Aorta (tissue), 5 donors: ENCODE measurements at regions of chr22 and their contacts with region 1.

Region 1: DNA sequence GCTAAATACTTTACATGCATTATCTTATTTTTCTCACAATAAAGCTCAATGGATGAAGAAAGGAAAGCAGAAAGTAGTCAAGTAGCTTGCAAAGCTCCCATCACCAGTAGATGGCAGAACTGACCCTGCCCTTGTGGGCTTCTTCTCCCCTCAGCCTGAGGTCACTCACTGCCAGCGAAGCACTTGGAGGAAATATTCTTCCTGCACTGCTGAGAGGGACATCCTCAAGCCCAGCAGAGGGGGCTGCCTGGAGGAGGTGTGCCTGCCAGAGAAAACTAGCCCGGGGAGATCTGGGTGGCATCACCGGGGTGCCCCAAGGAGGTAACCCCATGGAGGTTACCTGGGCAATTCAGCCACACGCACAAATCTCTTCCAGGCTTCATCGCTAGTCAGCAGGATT is 6.6 kb downstream of the APOL4 start:
- DNase-seq: peak in 1 of 2 donors; percentile 78
- ATAC-seq: peak; percentile 74
- H3K4me3 ChIP-seq: no peak overlapping the region
- H3K27ac ChIP-seq: no peak overlapping the region
- H3K4me1 ChIP-seq: no peaks in the 10 kb centered on the region
- H3K27me3 ChIP-seq: no peaks in the 10 kb centered on the region

Region 2: DNA sequence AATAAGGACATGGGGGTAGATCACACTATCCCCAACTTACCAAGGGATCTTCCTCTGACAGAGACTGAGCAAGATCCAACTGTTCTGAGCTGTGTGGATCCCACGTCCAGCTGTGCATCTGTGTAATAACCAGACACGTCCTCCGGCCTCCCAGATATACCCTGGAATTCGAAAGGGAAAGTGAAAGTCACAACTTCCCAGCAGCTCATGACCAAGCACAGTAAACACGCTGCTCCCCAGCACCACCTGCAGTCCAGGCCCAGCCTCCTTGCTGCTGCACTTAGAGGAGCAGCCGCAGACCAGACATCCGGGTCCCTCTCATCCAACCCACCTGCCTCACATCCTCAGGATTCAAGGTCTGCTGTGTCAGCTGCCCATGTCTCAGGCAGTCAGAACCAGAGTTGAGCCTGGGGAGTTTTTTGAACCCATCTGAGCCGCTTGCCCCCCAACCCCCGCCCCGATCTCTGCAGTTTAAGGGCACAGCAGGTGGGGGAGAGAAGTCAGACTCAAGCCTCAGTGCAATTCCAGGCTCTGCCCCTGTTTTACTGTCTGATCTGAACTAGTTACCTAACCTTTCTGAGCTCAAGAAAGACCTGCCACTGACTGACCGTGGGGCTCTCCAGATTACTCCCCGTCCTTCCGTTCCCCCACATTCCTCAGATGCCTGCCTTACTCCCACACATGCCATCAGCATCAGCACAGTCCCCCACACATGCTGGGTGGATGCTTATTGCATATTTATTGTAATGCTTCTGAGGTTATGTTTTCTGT is 44.6 kb after region 1 on chr22 and contains the start of gene APOL2:
- intact Hi-C with region 1: loop called in 1 of 2 experiments (anchors 5 kb)
- DNase-seq: peak; percentile 93 to 95
- ATAC-seq: peak; percentile 97
- H3K4me3 ChIP-seq: peak within 1 kb of the TSS; percentile 54 to 75
- H3K27ac ChIP-seq: peak within 1 kb of the TSS; percentile 20 to 80
- H3K4me1 ChIP-seq: no peaks in the 10 kb centered on the region
- H3K27me3 ChIP-seq: no peaks in the 10 kb centered on the region
- total RNA-seq, gene APOL2: 42.0 to 62.8 TPM

Region 3: GRCh38 chr22:36252754-36253517 is 58.0 kb after region 1 on chr22 and contains the start of gene APOL1:
- intact Hi-C with region 1: no loop called
- DNase-seq: peak in 1 of 2 donors; percentile 70
- ATAC-seq: peak; percentile 54
- H3K4me3 ChIP-seq: peak within 1 kb of the TSS in 1 of 2 donors; percentile 20
- H3K27ac ChIP-seq: peak within 1 kb of the TSS in 1 of 2 donors; percentile 31
- H3K4me1 ChIP-seq: no peaks in the 10 kb centered on the region
- H3K27me3 ChIP-seq: no peaks in the 10 kb centered on the region
- total RNA-seq, gene APOL1: 50.0 to 74.0 TPM

Region 4: GRCh38 chr22:36277482-36278291 is 82.7 kb after region 1 on chr22:
- intact Hi-C with region 1: loop called in 1 of 2 experiments (anchors 5 kb)
- DNase-seq: peak; percentile 56 to 71
- ATAC-seq: peak; percentile 67
- H3K4me3 ChIP-seq: no peak overlapping the region
- H3K27ac ChIP-seq: no peak overlapping the region
- H3K4me1 ChIP-seq: no peaks in the 10 kb centered on the region
- H3K27me3 ChIP-seq: no peaks in the 10 kb centered on the region

Region 5: GRCh38 chr22:36486619-36487384 is 291.8 kb after region 1 on chr22:
- intact Hi-C with region 1: loop called (anchors 2 to 5 kb)
- DNase-seq: no peak
- ATAC-seq: no peak
- H3K4me3 ChIP-seq: no peak overlapping the region
- H3K27ac ChIP-seq: no peak overlapping the region
- H3K4me1 ChIP-seq: no peaks in the 10 kb centered on the region
- H3K27me3 ChIP-seq: no peaks in the 10 kb centered on the region